PC-9 (cell line): ENCODE measurements at regions of chr4 and their contacts with region 1.

Region 1: GRCh38 chr4:96887857-96888256 is 1048.0 kb downstream of the PDHA2 start:
- DNase-seq: no peak
- H3K4me3 ChIP-seq: no peak overlapping the region
- H3K27ac ChIP-seq: no peak overlapping the region
- H3K4me1 ChIP-seq: no peaks in the 10 kb centered on the region
- H3K27me3 ChIP-seq: no peaks in the 10 kb centered on the region
- CTCF ChIP-seq: no peak

Region 2: GRCh38 chr4:96833831-96834230 is 54.0 kb before region 1 on chr4:
- CTCF ChIA-PET with region 1: no interaction called
- POLR2A ChIA-PET with region 1: no interaction called
- intact Hi-C with region 1: no loop called
- DNase-seq: no peak
- H3K4me3 ChIP-seq: no peak overlapping the region
- H3K27ac ChIP-seq: no peak overlapping the region
- H3K4me1 ChIP-seq: no peaks in the 10 kb centered on the region
- H3K27me3 ChIP-seq: no peaks in the 10 kb centered on the region
- CTCF ChIP-seq: no peak

Region 3: DNA sequence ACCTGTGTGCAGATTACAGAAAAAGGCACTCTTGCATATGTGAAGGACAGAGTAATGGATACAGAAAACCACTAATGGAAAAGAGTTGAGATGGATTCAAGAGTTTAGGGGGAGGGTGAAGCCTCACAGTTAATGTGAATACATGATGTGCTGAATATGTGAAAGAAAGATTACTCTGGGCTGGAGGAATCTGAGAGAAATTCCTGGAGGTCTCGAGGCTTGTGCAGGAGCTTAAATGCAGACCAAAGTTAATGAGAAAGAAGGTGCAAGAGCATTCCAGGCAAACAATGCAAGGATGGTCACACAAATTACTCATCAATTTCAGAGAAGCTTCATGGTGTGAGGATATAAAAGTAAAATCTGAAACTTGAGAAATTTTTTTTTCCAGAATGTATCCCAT is 486.7 kb after region 1 on chr4:
- CTCF ChIA-PET with region 1: no interaction called
- POLR2A ChIA-PET with region 1: interaction called, 16 read pairs
- intact Hi-C with region 1: no loop called
- DNase-seq: no peak
- H3K4me3 ChIP-seq: no peak overlapping the region
- H3K27ac ChIP-seq: no peak overlapping the region
- H3K4me1 ChIP-seq: no peaks in the 10 kb centered on the region
- H3K27me3 ChIP-seq: no peaks in the 10 kb centered on the region
- CTCF ChIP-seq: no peak